Adrenal gland (tissue), 19 donors: ENCODE measurements at regions of chr2 and their contacts with region 1.

Region 1: GRCh38 chr2:227238238-227239237 is 74.1 kb downstream of the COL4A3 start:
- DNase-seq: peak; percentile 63 to 92 (median 80)
- H3K4me3 ChIP-seq: no peak overlapping the region
- H3K27ac ChIP-seq: no peak overlapping the region
- H3K4me1 ChIP-seq: peaks cover 0 to 5% of the 10 kb centered on the region in 2 donors
- H3K27me3 ChIP-seq: no peaks in the 10 kb centered on the region
- CTCF ChIP-seq: peak; percentile 90 to 99 (median 91)
- POLR2A ChIP-seq: no peak

Region 2: DNA sequence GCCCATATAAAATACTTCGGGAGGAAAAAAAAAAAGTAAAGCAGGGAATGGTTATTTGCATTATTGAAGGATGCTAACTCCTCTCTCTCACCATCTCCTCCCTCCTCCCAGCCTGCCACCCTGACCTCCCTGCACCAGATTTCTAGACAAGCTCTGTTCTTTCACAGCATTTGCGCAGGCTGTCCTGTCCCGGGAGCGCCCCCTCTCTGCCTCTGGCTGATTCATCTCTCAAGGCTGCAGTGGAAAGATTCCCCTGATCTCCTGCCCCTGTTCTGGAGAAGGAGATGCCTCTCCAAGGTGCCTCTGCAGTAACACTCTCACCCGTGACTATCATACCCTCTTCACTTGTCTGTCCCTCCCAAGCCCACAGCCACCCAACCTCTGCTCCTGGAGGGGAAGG is 113.0 kb before region 1 on chr2:
- intact Hi-C with region 1: loop called (anchors 2 to 5 kb)
- DNase-seq: peak; percentile 38 to 71 (median 70)
- H3K4me3 ChIP-seq: no peak overlapping the region
- H3K27ac ChIP-seq: no peak overlapping the region
- H3K4me1 ChIP-seq: peaks cover 0 to 4% of the 10 kb centered on the region in 2 donors
- H3K27me3 ChIP-seq: no peaks in the 10 kb centered on the region
- CTCF ChIP-seq: peak in 4 of 6 experiments; percentile 2 to 30 (median 21)
- POLR2A ChIP-seq: no peak

Region 3: GRCh38 chr2:227132986-227133385 is 105.6 kb before region 1 on chr2:
- intact Hi-C with region 1: loop called (anchors 2 to 5 kb)
- DNase-seq: peak in 3 of 7 donors; percentile 26 to 36 (median 31)
- H3K4me3 ChIP-seq: no peak overlapping the region
- H3K27ac ChIP-seq: peak overlapping the region in 1 of 5 donors; percentile 27
- H3K4me1 ChIP-seq: peaks cover 0 to 17% of the 10 kb centered on the region in 2 donors
- H3K27me3 ChIP-seq: no peaks in the 10 kb centered on the region
- CTCF ChIP-seq: no peak
- POLR2A ChIP-seq: no peak